ENCODE measurements at regions of chr2 and their contacts with region 1.

Region 1: DNA sequence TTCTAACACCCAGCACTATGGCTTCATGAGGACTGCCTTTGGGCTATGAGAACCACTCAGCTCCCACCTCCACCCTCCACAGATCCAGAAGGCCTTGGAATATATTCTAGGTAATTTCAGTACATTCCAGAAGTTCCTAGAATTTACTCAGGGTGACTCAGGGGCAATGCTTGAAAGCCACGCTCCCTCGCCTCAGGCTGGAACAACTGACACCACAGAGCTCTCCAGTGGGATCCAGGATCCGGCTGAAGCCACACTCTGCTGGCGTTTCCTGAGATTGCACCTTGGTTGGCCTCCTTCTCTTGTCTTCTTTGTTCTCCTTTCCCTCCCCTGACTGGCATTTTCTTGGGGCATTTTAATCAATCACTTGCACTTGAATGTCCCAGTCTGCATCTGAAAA is 92.7 kb upstream of the KCNE4 start:
- ATAC-seq: peak in 3 of 8 experiments; percentile 83 to 97 (median 97)
- H3K4me3 ChIP-seq: no peak overlapping the region
- H3K27ac ChIP-seq: no peak overlapping the region
- H3K4me1 ChIP-seq: no peaks in the 10 kb centered on the region

Region 2: GRCh38 chr2:223815186-223815883 is 856.0 kb after region 1 on chr2:
- in situ Hi-C with region 1: loop called in 1 of 9 experiments (anchors 25 kb)
- ATAC-seq: peak in 4 of 8 experiments; percentile 31 to 77 (median 55)
- H3K4me3 ChIP-seq: no peak overlapping the region
- H3K27ac ChIP-seq: no peak overlapping the region
- H3K4me1 ChIP-seq: no peaks in the 10 kb centered on the region